ENCODE measurements at regions of chr11 and their contacts with region 1.

Region 1: GRCh38 chr11:111759376-111759775 is 6.8 kb downstream of the PPP2R1B start:
- DNase-seq: no peak
- ATAC-seq: peak in 1 of 2 donors; percentile 45
- H3K4me3 ChIP-seq: no peak overlapping the region
- H3K27ac ChIP-seq: no peak overlapping the region
- H3K4me1 ChIP-seq: peaks cover 2% of the 10 kb centered on the region
- H3K27me3 ChIP-seq: no peaks in the 10 kb centered on the region

Region 2: DNA sequence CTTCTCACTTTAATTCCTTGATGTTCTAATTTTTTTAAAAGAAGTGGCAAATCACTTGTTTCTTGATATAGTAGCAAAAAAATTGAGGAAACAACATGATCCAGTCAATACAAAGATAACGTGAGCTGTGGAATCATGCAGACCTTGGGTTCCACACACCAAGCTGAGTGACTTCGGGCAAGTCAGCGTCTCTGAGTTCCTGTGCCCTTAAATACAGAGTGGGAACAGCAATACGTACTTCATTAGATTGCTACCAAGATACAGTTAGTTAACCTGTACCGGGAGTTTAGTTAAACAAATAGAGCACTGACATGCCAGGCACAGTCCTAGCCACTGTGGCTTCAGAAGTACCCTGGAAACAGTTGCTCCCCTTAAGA is 51.7 kb before region 1 on chr11:
- intact Hi-C with region 1: no loop called
- DNase-seq: no peak
- ATAC-seq: no peak
- H3K4me3 ChIP-seq: no peak overlapping the region
- H3K27ac ChIP-seq: no peak overlapping the region
- H3K4me1 ChIP-seq: peaks cover 2% of the 10 kb centered on the region
- H3K27me3 ChIP-seq: no peaks in the 10 kb centered on the region

Region 3: GRCh38 chr11:111723595-111723994 is 35.8 kb before region 1 on chr11:
- intact Hi-C with region 1: loop called in 1 of 4 experiments (anchors 5 kb)
- DNase-seq: peak in 2 of 3 donors; percentile 70 to 78
- ATAC-seq: peak; percentile 25 to 41
- H3K4me3 ChIP-seq: no peak overlapping the region
- H3K27ac ChIP-seq: no peak overlapping the region
- H3K4me1 ChIP-seq: peaks cover 3% of the 10 kb centered on the region
- H3K27me3 ChIP-seq: no peaks in the 10 kb centered on the region

Region 4: GRCh38 chr11:111870522-111870885 is 111.1 kb after region 1 on chr11:
- intact Hi-C with region 1: no loop called
- DNase-seq: no peak
- ATAC-seq: no peak
- H3K4me3 ChIP-seq: peak overlapping the region; percentile 97
- H3K27ac ChIP-seq: peak overlapping the region; percentile 94
- H3K4me1 ChIP-seq: no peaks in the 10 kb centered on the region
- H3K27me3 ChIP-seq: no peaks in the 10 kb centered on the region

Measured in right cardiac atrium (tissue), 5 donors.